GM10248 (cell line): ENCODE measurements at regions of chr10 and their contacts with region 1.

Region 1: DNA sequence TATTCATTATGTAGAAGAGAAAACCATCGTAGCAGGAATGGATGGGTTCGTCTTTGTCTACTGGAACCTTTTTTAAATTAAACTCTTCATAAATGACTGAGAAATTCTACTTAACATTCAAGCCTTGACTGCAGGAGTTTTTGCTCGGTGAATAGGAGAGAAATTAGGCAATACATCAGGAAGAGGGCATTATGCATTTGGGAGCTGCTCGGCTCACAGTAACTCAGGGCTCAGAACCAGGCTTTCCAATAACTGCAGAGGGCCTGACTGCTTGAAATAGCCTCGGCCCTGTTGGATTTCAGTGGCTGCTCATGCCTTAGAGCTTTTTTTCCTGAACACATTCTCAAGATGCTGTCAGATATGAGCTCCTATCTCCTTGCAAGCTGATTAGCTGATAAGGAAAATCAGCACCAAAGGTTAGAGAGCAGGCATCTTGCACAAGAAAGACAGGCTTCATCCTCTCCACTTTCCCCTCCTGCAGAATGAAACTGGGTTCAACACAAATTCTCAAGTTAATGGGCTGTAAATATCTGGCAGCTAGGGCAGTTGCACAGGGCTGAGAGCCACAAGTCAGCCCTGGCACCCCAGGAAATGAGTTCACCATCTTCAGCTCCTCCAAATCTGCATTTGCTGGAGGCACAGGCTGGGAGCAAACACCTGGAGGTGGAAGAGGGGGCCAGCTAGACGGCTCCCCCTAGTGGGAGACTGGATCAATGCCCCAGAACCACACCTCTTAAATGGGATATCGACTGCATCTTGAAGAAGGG is 24.3 kb downstream of the TECTB start:
- DNase-seq: peak; percentile 76
- CTCF ChIP-seq: peak; percentile 84

Region 2: GRCh38 chr10:111785921-111786320 is 521.6 kb before region 1 on chr10:
- CTCF ChIA-PET with region 1: no interaction called
- POLR2A ChIA-PET with region 1: no interaction called
- DNase-seq: no peak
- CTCF ChIP-seq: no peak

Region 3: DNA sequence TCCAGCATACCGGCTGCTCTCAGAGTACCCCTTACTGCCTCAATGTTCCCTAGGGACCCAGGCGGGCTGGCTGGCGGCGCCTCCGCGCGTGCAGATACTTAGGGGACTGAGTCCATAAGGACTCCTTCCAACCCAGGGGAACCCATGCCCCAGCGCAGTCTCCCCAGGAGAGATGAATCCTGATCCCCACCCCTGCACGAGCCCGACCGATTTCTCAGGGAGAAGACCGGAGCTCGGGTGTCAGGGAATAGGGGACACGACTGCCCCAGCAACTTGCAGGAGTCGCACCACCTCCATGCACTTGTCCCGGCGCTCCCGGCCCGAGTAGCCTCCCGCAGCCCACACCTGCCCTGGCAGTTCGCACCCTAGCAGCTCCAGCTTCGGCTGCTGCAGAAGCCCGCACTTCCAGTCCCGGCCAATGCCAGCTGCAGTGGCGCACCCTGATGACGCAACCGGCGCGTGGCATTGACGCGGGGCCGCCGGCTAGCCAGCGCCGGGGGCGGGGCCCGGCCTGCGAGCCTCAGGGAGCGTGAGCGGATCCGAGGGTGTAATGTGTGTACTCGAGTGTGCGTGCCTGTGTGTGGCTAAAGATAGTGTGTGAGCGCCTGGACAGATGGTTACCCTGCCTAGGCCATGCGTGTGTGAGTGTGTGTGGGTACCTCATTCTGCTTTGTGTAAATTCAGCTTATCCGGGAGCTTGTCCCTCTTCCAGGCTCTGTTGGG is 124.1 kb before region 1 on chr10 and contains the start of gene GPAM:
- CTCF ChIA-PET with region 1: interaction called, 16 read pairs
- POLR2A ChIA-PET with region 1: no interaction called
- DNase-seq: peak; percentile 95
- CTCF ChIP-seq: no peak

Region 4: GRCh38 chr10:112295853-112296830 is 11.4 kb before region 1 on chr10:
- CTCF ChIA-PET with region 1: interaction called, 47 read pairs
- POLR2A ChIA-PET with region 1: no interaction called
- DNase-seq: no peak
- CTCF ChIP-seq: no peak

Region 5: GRCh38 chr10:112327678-112328077 is 20.1 kb after region 1 on chr10:
- CTCF ChIA-PET with region 1: interaction called, 12 read pairs
- POLR2A ChIA-PET with region 1: no interaction called
- DNase-seq: no peak
- CTCF ChIP-seq: no peak